A549 (cell line): ENCODE measurements at regions of chr10 and their contacts with region 1.

Region 1: GRCh38 chr10:6401562-6402348 is 178.3 kb downstream of the PRKCQ start:
- DNase-seq: peak; percentile 96 to 97
- ATAC-seq: peak; percentile 90
- H3K4me3 ChIP-seq: peak overlapping the region; percentile 25; the same call in 1 of the 3 replicates
- H3K27ac ChIP-seq: peak overlapping the region; percentile 91 to 96
- H3K4me1 ChIP-seq: peaks cover 72% of the 10 kb centered on the region
- CTCF ChIP-seq: peak; percentile 89
- EP300 ChIP-seq: peak; percentile 43 to 66; a peak in 2 of 5 replicates
- POLR2A ChIP-seq: no peak
- RAD21 ChIP-seq: peak; percentile 99

Region 2: DNA sequence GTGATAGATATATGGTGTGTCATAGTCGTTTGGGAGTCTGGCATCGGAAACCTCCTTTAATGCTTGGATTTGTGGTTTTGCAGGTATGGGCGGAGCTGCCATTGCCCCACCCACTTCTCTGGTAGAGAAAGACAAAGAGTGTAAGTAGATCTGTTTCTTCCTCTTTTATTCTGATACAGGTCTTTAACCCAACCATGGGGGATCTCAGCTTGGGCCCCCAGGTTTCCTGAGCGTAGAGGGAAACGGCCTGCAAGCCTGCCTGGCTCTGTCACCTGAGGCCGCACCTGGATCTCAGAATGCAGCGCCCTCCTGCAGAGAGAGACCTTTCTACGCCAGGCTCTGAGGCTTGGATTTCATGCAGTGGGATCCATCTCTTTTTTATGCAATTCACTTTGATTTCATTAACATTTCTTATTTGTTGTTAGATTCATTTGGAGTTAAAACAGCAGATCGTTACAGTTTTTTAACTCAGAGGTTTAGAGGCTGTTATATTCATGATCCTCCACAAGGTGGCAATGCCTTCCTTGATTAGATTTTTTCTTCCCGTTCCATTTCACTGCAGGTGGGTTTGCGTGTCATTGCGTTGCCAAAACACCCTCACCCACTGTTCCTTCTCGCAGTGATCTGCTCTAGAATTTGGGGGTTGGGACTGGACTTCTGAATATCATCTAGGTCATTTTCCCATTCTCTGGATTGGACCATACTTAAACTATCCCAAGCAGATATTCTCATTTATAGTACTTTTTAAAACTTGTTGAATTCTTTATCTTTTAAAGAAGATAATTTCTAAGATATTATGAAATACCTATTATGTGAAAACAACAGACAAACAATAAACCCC is 292.9 kb before region 1 on chr10:
- CTCF ChIA-PET with region 1: interaction called, 65 read pairs
- POLR2A ChIA-PET with region 1: interaction called, 4 read pairs
- DNase-seq: peak; percentile 57 to 65
- ATAC-seq: peak in 1 of 2 experiments; percentile 58; a peak in 2 of 6 replicates
- H3K4me3 ChIP-seq: no peak overlapping the region
- H3K27ac ChIP-seq: peak overlapping the region in 1 of 2 experiments; percentile 36; a peak in 1 of 6 replicates
- H3K4me1 ChIP-seq: peaks cover 25% of the 10 kb centered on the region; the same call in 2 of the 3 replicates
- CTCF ChIP-seq: peak; percentile 86
- EP300 ChIP-seq: no peak
- POLR2A ChIP-seq: no peak
- RAD21 ChIP-seq: peak; percentile 82 to 84

Region 3: DNA sequence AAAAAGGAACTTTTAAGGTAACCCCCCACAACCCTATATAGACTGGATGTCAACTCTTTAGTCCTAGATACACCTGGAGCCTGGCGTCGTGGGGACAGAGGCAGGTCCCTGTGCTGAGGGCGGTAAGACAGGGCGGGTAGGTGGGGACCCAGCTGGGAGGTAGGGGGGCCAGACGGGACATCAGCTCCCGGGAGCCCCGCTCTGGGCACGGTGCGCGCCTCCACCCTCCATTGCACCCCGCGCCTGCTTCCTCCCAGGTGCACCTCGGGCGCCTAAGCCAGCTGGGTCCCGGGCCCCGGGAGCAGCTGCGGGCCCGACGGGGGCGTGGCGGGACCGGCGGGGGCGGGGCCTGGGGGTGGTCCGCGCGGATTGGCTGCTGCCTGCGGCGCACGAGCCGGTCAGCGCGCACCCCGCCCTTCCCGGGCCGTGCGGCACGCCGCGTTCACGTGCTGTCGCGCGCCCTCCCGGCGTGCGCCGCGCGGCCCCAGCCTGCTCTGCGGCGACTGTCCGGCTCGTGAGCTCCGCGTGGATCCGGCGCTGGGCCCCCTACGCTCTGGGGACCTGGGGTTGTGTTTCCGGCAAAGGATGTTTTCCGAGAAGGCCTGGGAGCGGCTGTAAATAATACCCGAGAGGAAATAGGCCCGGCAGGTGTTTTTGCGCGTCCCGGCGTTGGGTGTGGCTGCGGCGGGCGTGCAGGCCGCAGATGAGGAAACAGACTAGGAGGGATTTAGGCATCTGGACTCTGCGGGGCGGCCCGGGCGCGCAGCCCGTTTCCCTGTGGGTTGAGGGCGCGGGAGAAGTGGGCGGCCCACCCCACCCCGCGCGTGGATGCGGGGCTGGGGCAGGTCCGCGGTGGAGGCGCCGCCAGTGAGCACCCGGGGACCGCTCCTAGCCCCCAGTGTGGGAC is 238.1 kb before region 1 on chr10:
- CTCF ChIA-PET with region 1: interaction called, 14 read pairs
- POLR2A ChIA-PET with region 1: interaction called, 5 read pairs
- DNase-seq: peak; percentile 80 to 89
- ATAC-seq: peak; percentile 97 to 99
- H3K4me3 ChIP-seq: peak overlapping the region; percentile 100
- H3K27ac ChIP-seq: peak overlapping the region; percentile 87 to 94
- H3K4me1 ChIP-seq: peaks cover 16% of the 10 kb centered on the region; the same call in 1 of the 3 replicates
- CTCF ChIP-seq: no peak
- EP300 ChIP-seq: no peak
- POLR2A ChIP-seq: peak; percentile 61
- RAD21 ChIP-seq: no peak

Region 4: DNA sequence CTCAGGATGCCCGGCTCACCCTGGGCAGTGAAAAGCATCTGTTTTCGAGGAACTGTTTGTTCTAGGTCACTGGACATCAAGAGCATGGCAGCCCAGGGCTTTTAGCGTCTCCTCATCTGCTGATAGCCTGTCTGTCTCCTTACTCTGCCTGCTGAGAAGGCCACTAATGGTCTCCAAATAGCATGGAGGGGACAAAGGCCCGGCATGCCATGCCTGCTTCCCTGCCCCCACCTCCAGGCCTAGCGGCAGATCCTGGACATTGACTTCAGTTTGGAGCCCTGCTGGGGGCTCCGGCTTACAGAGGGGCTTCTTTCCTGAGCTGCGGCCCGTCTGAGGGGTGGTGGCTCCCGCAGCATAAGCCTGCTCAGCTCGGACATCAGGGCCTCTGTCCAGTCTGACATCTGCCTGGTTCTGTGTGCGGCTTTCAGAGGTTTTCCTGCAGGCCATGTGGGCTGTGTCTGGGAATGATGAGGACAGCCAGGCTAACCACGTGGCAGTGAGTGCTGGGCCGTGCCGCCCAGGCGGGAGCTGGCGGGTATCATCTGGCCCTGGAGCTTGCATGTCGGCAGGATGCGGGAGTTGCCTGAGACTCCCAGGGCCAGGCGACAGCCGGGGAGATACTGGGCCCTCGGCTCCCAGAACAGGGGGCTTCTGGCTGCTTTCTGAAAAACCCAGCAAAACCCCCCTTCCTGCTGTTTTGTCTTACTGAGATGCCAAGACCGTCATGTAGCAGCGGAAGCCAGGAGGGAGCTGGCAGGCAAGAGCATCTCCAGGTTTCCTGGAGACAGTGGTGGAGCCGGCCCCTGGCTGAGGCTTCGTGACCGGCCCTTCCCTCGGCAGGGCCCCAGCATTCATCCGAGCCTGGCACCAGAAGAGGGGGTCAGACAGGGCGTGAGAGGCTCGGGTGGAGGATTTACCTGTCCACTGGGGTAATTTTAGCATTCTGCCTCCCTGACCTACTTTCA is 189.8 kb before region 1 on chr10:
- CTCF ChIA-PET with region 1: interaction called, 123 read pairs
- POLR2A ChIA-PET with region 1: interaction called, 7 read pairs
- DNase-seq: peak in 1 of 2 experiments; percentile 59
- ATAC-seq: peak; percentile 22 to 32; a peak in 4 of 6 replicates
- H3K4me3 ChIP-seq: peak overlapping the region; percentile 20
- H3K27ac ChIP-seq: peak overlapping the region; percentile 58 to 83
- H3K4me1 ChIP-seq: peaks cover 93% of the 10 kb centered on the region
- CTCF ChIP-seq: no peak
- EP300 ChIP-seq: no peak
- POLR2A ChIP-seq: no peak
- RAD21 ChIP-seq: no peak

Region 5: GRCh38 chr10:6244510-6244909 is 157.2 kb before region 1 on chr10:
- CTCF ChIA-PET with region 1: interaction called, 23 read pairs
- POLR2A ChIA-PET with region 1: interaction called, 9 read pairs
- DNase-seq: no peak
- ATAC-seq: no peak
- H3K4me3 ChIP-seq: no peak overlapping the region
- H3K27ac ChIP-seq: peak overlapping the region in 1 of 2 experiments; percentile 86; a peak in 3 of 6 replicates
- H3K4me1 ChIP-seq: peaks cover 29% of the 10 kb centered on the region
- CTCF ChIP-seq: no peak
- EP300 ChIP-seq: no peak
- POLR2A ChIP-seq: no peak
- RAD21 ChIP-seq: no peak

Region 6: DNA sequence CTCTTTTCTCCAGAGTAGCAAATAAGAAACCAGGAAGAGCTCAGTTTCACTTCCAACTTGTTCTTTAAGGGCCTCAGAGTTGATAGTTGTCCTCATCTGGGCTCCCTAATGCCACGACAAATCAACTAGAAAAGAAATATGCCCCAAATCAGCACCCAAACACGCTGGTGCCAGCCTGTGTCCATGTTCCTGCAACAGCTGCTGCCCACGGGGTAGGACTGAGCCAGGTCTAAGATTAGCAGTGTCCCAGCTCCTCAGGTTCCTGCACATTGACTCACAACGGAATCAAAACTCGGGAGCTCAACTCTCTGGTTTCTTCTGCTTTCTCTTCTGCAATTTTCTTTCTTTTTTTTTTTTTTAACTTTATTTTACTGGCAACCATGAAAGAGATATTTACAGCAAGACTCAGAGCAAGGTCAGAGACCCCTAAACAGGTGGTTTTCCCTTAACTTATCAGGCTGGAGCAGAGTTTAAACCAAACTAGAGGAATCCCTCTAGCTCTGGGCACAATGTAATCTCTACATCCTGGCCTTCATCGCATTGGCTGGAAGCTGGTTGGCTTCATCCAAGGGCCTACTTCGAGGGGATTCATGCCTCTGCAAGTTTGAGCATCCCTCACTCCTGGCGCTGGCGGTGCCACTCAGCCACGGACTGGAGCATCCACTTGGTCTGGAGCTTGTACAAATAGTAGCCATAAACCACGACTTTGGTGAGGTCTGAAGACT is 72.9 kb before region 1 on chr10:
- CTCF ChIA-PET with region 1: interaction called, 15 read pairs
- POLR2A ChIA-PET with region 1: no interaction called
- DNase-seq: no peak
- ATAC-seq: no peak
- H3K4me3 ChIP-seq: no peak overlapping the region
- H3K27ac ChIP-seq: no peak overlapping the region; a peak in 1 of 6 replicates
- H3K4me1 ChIP-seq: no peaks in the 10 kb centered on the region
- CTCF ChIP-seq: no peak
- EP300 ChIP-seq: no peak
- POLR2A ChIP-seq: no peak
- RAD21 ChIP-seq: no peak